Adrenal gland (tissue), 19 donors: ENCODE measurements at regions of chr3 and their contacts with region 1.

Region 1: DNA sequence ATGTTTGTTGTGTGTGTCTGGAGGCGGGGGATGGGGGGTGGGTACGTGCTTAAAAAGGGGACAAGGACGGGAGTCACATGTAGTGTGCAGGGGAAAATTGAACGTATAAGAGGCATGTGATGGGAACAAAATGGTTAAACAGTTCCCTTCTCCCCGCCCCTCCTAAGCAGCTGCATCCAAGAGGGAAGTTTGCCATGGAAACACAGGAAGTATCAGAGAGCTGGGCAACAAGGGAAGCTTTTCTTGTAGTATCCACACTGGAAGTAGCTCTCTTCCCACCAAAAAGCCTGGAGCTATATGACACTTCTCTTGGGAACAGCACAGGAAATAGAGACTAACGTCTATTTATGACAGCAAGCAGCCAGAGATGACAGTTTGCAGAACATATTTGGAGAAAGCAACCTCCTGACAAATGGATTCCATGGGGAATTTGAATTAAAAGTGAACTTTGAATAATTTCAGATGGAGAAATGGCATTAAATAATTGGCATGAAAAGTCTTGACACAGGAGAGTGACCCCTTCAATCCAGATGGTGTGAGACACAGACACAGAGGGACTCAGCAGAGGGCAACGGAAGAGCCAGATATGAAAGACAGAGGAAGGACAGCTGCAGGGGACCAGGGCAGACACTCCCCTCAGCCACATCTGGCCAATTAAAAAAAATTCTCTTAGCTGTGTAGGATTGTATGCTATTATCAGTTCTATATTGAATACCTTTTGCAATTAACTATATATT is 294.2 kb upstream of the TBL1XR1 start:
- DNase-seq: no peak
- H3K4me3 ChIP-seq: no peak overlapping the region
- H3K27ac ChIP-seq: no peak overlapping the region
- H3K4me1 ChIP-seq: peaks cover 0 to 7% of the 10 kb centered on the region in 2 donors
- H3K27me3 ChIP-seq: no peaks in the 10 kb centered on the region
- CTCF ChIP-seq: no peak
- POLR2A ChIP-seq: no peak

Region 2: DNA sequence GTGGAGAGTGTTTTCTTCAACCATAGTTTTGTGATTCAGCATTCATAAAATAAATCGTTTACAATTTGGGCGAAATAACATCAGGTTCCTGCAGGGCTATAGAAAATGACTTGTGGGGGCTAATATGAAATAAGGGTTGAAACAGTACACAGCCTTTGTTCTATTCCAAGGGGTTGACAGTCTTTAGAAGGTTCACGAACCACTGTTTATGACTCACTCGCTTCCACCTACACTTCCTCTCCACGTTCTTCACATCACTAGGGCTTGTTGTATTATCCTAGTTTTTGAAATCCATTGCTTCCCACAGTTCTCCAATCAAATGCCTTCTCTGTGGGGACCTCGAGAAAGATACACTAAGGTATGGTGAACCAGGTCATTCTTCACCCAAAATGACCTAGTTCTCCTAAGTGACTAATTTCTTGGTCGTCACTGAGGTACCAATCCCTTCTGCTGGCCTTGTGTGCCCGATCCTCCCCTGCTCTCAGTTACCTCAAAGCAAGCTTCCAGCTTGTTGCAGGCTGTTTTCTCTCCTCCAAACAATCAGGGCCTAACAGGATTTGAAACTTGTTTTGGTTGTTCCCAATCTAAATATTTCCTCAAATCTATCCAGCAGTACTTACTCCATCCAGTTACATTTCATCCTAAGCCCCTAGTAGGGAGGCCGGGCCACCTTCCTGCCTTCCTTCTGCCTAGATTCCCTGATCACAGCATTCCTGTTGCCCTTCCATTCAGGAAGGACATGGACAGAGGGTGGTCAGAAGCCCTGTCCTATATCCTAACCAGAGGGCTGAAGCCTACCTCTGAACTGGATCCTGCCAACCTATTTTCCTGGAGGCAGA is 271.1 kb before region 1 on chr3:
- intact Hi-C with region 1: loop called in 1 of 2 experiments (anchors 5 kb)
- DNase-seq: peak in 1 of 7 donors; percentile 18
- H3K4me3 ChIP-seq: no peak overlapping the region
- H3K27ac ChIP-seq: no peak overlapping the region
- H3K4me1 ChIP-seq: no peaks in the 10 kb centered on the region
- H3K27me3 ChIP-seq: no peaks in the 10 kb centered on the region
- CTCF ChIP-seq: no peak
- POLR2A ChIP-seq: no peak

Region 3: DNA sequence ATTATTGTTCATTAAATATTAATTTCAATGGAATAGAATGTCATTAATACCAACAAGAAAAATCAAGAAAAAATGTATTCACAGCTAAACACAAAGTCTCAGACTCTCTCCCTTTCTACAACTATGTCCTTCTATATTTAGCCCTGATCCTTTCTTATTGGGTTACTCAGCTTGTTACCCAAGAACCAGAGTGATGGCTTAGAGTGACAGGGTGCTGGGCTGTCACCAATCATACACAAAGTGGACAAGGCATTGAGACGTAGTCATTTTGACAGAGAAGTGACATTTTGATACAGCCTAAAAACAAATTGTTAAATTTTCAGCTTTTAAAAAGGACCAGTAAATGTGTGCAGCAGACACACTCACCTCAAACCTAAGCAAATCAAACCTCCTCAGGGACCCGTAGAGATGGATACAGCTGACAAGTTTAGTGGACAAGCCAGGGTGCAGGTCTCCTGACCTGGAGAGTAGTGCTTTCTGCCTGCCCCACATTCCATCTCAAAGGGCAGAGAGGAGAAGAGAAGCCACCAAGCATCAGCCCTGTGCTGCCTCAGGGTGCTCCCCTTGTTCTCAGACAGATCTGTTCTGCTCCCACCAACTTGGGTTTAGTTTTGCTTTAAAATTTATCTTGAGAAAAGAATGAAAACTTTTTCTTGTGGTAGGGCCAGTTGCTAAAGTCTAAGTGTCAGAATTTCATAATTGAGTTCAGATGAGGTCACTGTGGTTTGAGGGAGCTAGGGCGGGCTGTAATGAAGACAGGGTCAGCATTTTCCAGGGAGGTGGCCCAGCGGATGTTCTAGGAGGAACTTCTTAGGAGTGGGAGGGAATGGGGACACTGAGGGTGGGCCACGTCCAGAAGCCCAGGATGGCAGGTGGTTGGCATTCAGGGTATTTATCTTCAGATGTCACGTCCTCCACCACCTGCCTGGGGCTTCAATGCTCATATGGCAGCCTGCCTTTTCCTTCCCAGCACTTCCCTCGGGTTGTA is 157.6 kb before region 1 on chr3:
- intact Hi-C with region 1: no loop called
- DNase-seq: peak in 6 of 7 donors; percentile 35 to 69 (median 47)
- H3K4me3 ChIP-seq: no peak overlapping the region
- H3K27ac ChIP-seq: peak overlapping the region in 2 of 5 donors; percentile 20 to 68
- H3K4me1 ChIP-seq: peaks cover 36 to 75% of the 10 kb centered on the region in 2 donors
- H3K27me3 ChIP-seq: no peaks in the 10 kb centered on the region
- CTCF ChIP-seq: no peak
- POLR2A ChIP-seq: no peak